IMR-90 (cell line): ENCODE measurements at regions of chrX and their contacts with region 1.

Region 1: DNA sequence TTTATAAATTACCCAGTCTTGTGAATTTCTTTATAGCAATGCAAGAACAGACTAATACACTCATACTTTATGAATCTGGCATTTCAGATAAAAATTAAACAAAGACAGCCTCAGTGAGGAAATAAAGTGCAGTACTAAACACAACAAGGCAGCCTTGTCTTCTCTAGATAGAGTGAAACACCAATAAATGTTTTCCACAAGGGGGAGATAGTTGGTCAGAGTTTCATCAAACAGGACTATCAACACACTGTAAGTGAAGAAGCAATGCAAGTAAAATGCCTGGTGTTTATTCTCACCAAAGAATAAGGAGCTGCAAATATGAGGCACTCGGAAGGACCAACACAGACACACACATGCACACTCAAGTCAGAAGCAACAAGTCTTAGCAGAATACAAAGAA is 62.8 kb downstream of the FAM9B start:
- DNase-seq: peak; percentile 67
- ATAC-seq: peak; percentile 92
- H3K4me3 ChIP-seq: no peak overlapping the region
- H3K27ac ChIP-seq: no peak overlapping the region
- H3K4me1 ChIP-seq: no peaks in the 10 kb centered on the region
- H3K27me3 ChIP-seq: no peaks in the 10 kb centered on the region
- CTCF ChIP-seq: peak; percentile 51
- POLR2A ChIP-seq: no peak
- RAD21 ChIP-seq: peak; percentile 69

Region 2: DNA sequence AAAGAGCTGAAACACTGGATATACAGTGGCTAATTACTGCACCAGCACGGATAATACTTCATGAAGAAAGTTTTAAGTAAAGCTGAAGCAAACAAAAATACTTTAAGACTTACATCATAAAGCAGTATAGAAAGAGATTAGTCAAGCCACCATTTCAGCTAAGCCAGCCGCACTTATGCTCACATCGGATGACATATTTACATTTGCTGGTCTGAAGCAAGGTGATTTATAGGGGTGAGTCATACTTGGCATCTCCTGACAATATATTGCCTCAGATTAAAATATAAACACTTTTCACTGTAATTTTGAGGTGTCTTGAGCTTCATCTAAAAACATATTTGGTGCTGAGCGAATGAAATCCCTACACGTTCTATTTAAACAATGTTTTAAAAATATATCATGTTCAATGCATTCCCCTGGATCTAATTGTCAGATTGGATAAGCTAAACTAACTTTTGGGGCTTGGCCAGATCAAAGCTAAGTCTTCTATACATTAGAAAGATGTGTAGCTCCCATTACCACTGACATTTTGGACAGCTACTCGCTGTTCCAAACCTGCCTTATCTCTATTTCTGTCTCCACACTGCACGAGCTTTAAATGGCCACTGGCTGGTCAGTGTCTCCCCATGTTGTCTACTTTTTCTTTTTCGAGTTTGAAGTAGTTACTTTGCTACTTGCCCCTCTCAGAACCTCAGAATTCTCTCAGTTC is 903.2 kb before region 1 on chrX:
- CTCF ChIA-PET with region 1: no interaction called
- POLR2A ChIA-PET with region 1: no interaction called
- dilution Hi-C with region 1: no loop called
- in situ Hi-C with region 1: no loop called
- intact Hi-C with region 1: no loop called
- DNase-seq: peak; percentile 28
- ATAC-seq: no peak
- H3K4me3 ChIP-seq: no peak overlapping the region
- H3K27ac ChIP-seq: no peak overlapping the region
- H3K4me1 ChIP-seq: no peaks in the 10 kb centered on the region
- H3K27me3 ChIP-seq: no peaks in the 10 kb centered on the region
- CTCF ChIP-seq: no peak
- POLR2A ChIP-seq: no peak
- RAD21 ChIP-seq: no peak

Region 3: DNA sequence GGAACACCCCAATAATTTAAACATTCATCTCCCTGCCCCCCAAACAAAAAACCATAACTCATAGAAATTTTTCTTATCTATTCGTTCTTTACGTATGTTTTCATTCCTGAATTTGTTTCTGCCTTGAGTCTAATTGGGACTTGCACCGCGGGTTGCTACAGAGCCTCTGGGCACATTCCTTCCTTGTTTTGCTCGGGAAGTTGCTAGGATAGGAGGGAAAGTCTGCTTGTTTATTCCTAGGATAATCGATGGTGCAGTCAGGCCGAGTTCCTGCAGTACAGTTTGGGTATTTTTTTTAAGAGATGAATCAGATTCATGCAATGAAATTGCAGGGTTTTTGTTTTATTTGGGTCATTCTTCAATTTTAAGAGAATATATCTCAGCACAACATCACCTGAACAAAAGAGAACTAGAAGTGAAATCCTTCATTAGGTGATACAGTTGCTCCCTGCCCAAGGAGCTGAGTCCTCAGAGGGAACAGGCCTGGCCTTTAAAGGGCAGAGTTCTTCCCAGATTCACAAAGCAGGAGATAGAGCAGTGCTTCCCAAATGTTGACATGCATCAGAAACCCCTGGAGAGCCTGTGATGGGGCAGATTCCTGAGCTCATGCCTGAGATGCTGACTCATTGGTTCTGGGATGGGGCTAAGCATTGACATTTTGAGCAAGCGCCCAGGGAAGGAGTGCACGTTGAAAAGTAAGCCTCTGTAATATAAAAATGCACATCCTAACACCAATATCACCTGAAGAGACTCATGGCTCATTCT is 177.7 kb after region 1 on chrX:
- CTCF ChIA-PET with region 1: no interaction called
- POLR2A ChIA-PET with region 1: no interaction called
- dilution Hi-C with region 1: no loop called
- in situ Hi-C with region 1: no loop called
- intact Hi-C with region 1: loop called (anchors 5 kb)
- DNase-seq: peak; percentile 71
- ATAC-seq: peak; percentile 91
- H3K4me3 ChIP-seq: no peak overlapping the region
- H3K27ac ChIP-seq: peak overlapping the region; percentile 96
- H3K4me1 ChIP-seq: peaks cover 11% of the 10 kb centered on the region
- H3K27me3 ChIP-seq: no peaks in the 10 kb centered on the region
- CTCF ChIP-seq: no peak
- POLR2A ChIP-seq: no peak
- RAD21 ChIP-seq: no peak

Region 4: GRCh38 chrX:9708904-9709553 is 737.9 kb after region 1 on chrX:
- CTCF ChIA-PET with region 1: no interaction called
- POLR2A ChIA-PET with region 1: no interaction called
- dilution Hi-C with region 1: no loop called
- in situ Hi-C with region 1: no loop called
- intact Hi-C with region 1: loop called (anchors 1 kb)
- DNase-seq: peak; percentile 55
- ATAC-seq: peak; percentile 91
- H3K4me3 ChIP-seq: no peak overlapping the region
- H3K27ac ChIP-seq: no peak overlapping the region
- H3K4me1 ChIP-seq: no peaks in the 10 kb centered on the region
- H3K27me3 ChIP-seq: no peaks in the 10 kb centered on the region
- CTCF ChIP-seq: peak; percentile 78
- POLR2A ChIP-seq: no peak
- RAD21 ChIP-seq: peak; percentile 84